ENCODE measurements at regions of chr1 and their contacts with region 1.

Region 1: DNA sequence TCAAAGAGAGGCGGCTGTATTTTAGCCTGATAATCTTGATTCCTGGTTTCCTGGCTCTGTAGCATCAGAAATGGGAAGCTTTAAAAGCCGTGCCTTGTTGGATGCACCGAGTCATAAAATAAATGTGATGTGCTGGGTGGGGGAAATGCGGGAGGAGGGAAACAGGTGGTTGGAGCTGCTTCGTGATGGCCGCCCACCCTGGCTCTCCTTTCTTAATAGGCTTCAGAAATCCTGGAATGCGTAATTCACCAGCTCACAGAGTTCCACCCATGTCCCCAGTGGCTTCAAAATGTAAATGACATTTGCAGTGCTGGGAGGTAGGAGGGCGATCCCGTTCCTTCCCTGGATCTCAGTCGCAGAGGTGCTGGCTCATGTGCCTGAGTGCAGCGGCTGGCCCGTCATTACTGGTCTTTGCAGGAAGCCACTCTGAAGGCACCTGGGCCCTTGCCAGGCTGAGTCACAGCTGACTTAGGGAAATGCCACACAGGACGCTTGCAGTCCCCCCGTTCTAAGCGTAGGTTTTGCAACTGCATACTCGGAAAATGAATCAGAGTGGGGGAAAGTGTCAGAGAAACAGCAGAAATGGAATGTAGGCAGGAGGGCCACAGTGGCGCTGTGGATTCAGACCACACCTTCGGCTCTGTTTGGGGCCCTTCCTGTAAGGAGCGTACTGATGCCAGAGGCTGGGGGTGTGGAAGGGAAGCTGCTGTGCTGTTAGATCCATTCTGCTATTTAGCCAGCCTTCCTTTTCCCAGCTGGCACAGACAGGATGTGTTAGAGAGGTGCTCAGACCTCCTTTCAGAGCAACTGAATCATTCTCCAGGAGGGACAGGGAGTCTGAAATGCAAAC is 37.6 kb downstream of the GALNT2 start:
- DNase-seq: peak; percentile 29
- H3K4me3 Mint-ChIP-seq: peak overlapping the region; percentile 38
- H3K27ac Mint-ChIP-seq: peak overlapping the region; percentile 83
- H3K4me1 Mint-ChIP-seq: peaks cover 85% of the 10 kb centered on the region
- H3K27me3 Mint-ChIP-seq: no peaks in the 10 kb centered on the region

Region 2: DNA sequence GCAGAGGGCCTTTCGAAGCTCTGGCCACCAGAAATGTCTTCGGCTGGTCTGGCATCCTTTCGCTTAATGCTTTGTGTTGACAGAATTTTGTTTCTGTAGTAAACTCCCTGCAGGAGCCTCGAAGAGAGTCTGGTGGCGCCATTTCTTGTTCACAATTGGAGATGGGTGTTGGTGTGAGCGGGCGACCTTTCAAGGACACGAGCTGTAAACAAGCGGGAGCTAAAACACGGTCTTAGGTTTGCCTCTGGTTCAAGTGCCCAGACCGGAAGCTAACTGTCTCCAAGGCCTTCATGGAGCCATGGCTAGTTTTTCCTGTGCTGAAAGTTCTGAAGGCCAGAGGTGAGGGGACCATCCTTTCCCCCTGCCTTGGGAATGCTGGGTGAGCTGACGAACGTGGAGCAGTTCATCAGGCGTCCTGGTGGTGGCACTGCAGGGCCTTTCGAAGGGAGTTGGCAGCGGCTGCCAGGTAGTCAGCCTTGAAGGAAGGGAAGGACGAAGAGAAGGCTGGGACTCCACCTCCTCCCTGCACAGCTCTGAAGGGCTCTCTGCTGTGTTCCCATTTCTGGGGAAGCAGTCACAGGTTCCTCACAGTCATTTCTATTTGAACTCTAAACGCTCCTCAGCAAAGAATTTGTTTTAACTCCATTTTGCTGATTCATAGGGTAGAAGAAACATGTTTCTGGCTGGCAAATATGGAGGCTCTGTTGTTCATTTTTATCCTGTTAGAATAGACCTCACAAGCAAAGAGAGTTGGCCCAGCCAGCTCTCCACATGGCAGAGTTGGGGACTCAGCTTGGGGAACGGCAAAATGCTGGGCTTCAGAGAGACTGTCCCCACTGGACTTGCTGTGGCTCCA is 443.4 kb before region 1 on chr1:
- intact Hi-C with region 1: loop called (anchors 1 kb)
- DNase-seq: peak; percentile 41
- H3K4me3 Mint-ChIP-seq: no peak overlapping the region
- H3K27ac Mint-ChIP-seq: no peak overlapping the region
- H3K4me1 Mint-ChIP-seq: peaks cover 10% of the 10 kb centered on the region
- H3K27me3 Mint-ChIP-seq: peaks cover 2% of the 10 kb centered on the region

Region 3: GRCh38 chr1:230077436-230078221 is 27.0 kb before region 1 on chr1:
- intact Hi-C with region 1: loop called (anchors 2 kb)
- DNase-seq: no peak
- H3K4me3 Mint-ChIP-seq: peak overlapping the region; percentile 0
- H3K27ac Mint-ChIP-seq: peak overlapping the region; percentile 68
- H3K4me1 Mint-ChIP-seq: peaks cover 43% of the 10 kb centered on the region
- H3K27me3 Mint-ChIP-seq: no peaks in the 10 kb centered on the region

Region 4: DNA sequence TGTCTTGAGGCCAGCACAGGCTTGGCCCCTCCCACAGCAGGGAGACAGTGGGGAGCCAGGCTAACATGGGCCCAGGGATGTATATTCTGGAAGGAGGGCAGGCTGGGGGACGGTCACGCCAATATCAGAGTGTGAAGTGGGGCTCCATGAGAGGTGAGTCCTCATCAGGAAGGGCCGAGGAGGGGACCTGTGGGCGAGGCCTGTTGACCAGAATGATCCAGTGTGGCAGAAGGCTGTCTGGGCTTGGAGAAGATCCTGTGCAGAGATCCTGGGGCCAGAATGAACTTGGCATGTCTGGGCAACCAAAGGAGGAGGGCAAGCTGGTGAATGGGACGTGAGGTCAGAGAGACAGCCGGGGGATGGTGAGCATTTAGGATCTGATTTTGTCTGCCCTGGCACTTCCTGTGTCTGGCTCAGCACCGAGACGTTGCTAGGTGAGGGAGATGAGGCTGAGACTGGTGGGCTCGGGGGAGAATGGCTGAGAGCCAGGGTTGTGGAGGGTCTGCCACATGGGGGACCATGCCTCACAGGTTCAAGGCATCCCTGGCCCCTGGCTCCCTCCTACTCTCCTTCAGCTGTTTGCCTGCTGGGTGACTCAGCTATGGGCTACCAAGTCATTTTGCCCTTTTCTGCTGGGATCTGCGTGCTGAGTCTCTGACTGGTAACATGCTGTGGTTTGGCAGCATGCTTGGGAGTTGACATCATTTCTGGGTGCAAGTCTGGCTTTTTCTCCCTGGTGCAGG is 20.3 kb before region 1 on chr1:
- intact Hi-C with region 1: loop called (anchors 1 kb)
- DNase-seq: no peak
- H3K4me3 Mint-ChIP-seq: no peak overlapping the region
- H3K27ac Mint-ChIP-seq: peak overlapping the region; percentile 74
- H3K4me1 Mint-ChIP-seq: peaks cover 49% of the 10 kb centered on the region
- H3K27me3 Mint-ChIP-seq: no peaks in the 10 kb centered on the region

Region 5: DNA sequence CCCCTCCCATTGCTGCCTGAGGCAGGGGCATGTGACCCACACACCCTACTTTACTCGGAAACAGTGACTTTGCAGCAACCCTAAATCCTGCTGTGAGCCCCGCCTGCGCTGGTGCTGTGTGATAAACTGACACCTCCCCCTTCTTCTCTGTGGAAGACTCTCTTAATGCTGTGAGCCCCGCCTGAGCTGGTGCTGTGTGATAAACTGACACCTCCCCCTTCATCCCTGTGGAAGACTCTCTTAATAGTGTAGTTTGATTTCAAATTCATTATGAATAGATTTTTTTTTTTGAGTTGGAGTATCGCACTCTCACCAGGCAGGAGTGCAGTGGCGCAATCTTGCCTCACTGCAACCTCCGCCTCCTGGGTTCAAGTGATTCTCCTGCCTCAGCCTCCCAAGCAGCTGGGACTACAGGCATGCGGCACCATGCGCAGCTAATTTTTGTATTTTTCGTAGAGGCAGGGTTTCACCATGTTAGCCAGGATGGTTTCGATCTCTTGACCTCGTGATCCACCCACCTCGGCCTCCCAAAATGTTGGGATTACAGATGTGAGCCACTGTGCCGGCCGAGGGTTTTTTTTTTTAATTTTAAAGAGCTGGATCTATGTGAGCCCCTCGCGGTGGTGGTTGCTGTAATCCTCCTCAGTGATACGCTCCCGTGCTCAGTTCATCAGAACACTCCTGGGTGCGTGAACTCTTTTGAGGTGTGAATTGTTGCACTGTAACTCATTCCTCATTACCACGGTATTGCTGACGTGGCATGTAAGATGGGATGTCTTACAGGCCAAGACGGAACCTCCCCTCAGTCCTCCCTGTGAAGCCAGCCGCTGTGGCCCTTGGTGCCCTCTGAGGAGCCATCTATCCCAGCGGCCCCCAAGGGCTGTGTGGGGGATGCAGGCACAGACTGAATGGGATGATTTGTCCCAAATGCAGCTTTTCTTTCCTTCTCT is 22.8 kb after region 1 on chr1:
- intact Hi-C with region 1: loop called (anchors 2 kb)
- DNase-seq: peak; percentile 47
- H3K4me3 Mint-ChIP-seq: peak overlapping the region; percentile 53
- H3K27ac Mint-ChIP-seq: peak overlapping the region; percentile 70
- H3K4me1 Mint-ChIP-seq: peaks cover 62% of the 10 kb centered on the region
- H3K27me3 Mint-ChIP-seq: no peaks in the 10 kb centered on the region

Region 6: DNA sequence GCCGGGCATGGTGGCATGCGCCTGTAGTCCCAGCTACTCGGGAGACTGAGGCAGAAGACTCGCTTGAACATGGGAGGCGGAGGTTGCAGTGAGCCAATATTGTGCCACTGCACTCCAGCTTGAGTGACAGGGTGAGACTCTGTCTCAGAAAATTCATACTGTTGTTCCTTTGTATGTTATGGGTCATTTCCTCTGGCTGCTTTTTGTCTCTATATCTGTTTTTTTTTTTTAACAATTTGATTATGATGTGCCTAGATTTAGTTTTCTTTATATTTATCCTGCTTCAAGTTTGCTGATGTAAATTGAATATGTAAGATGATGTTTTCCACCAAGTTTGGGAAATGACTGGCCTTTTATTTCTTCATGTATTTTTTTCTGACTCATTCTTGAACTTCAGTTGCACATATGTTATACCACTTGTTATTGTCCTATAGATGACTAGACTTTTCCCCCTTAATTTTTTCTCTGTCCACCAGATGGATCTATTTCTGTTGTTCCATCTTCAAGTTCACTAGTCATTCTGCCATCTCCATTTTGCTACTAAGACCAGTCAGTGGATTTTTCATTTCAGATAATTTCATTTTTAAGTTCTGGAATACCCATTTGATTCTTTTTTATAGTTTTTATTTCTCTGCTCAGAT is 135.9 kb after region 1 on chr1:
- intact Hi-C with region 1: loop called (anchors 1 kb)
- DNase-seq: no peak
- H3K4me3 Mint-ChIP-seq: no peak overlapping the region
- H3K27ac Mint-ChIP-seq: peak overlapping the region; percentile 85
- H3K4me1 Mint-ChIP-seq: peaks cover 35% of the 10 kb centered on the region
- H3K27me3 Mint-ChIP-seq: no peaks in the 10 kb centered on the region

Region 7: GRCh38 chr1:230303822-230304221 is 199.2 kb after region 1 on chr1:
- intact Hi-C with region 1: loop called (anchors 5 kb)
- DNase-seq: no peak
- H3K4me3 Mint-ChIP-seq: no peak overlapping the region
- H3K27ac Mint-ChIP-seq: peak overlapping the region; percentile 4
- H3K4me1 Mint-ChIP-seq: peaks cover 24% of the 10 kb centered on the region
- H3K27me3 Mint-ChIP-seq: no peaks in the 10 kb centered on the region

Measured in activated T-helper 2 cell treated with anti-CD3 and anti-CD28 coated beads, Interferon-gamma antibody, Interleukin-2, Interleukin-4, amounts not matched to agents 10 μg/mL and 5 μg/mL and 100 μg/mL, durations not matched to agents 14 hours and 24 hours and 36 hours (primary cell).